ENCODE measurements at regions of chr2 and their contacts with region 1.

Region 1: DNA sequence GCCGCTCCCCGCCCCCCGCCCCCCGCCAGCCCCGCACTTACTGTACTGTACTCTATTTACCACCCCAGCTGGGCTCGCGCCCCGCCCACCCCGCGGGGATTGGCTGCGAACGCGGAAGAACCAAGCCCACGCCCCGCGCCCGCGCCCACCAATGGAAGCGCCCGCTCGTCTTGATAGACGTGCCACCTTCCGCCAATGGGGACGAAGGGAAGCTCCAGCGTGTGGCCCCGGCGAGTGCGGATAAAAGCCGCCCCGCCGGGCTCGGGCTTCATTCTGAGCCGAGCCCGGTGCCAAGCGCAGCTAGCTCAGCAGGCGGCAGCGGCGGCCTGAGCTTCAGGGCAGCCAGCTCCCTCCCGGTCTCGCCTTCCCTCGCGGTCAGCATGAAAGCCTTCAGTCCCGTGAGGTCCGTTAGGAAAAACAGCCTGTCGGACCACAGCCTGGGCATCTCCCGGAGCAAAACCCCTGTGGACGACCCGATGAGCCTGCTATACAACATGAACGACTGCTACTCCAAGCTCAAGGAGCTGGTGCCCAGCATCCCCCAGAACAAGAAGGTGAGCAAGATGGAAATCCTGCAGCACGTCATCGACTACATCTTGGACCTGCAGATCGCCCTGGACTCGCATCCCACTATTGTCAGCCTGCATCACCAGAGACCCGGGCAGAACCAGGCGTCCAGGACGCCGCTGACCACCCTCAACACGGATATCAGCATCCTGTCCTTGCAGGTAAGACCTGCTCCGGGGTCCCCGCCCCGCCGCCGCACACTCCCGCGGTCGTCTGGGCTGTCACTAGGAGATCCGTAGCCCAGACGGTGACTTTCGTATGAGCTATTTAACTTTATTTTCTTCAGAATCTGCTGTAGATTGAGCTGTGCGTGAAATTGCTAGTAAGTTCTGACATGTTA is at the start of gene ID2:
- DNase-seq: peak; percentile 99 to 100 (median 99)
- H3K4me3 ChIP-seq: peak within 1 kb of the TSS; percentile 73
- H3K27ac ChIP-seq: peak within 1 kb of the TSS; percentile 58 to 97
- H3K4me1 ChIP-seq: no peaks in the 10 kb centered on the region
- H3K27me3 ChIP-seq: no peaks in the 10 kb centered on the region
- CTCF ChIP-seq: peak in 2 of 3 donors; percentile 9 to 21
- EP300 ChIP-seq: no peak
- POLR2A ChIP-seq: peak; percentile 99
- total RNA-seq, gene ID2: 68.5 to 897 (median 168) TPM

Region 2: GRCh38 chr2:7427293-7428060 is 1254.6 kb before region 1 on chr2:
- intact Hi-C with region 1: loop called in 3 of 4 experiments (anchors 2 to 10 kb)
- DNase-seq: peak in 1 of 5 donors; percentile 40
- H3K4me3 ChIP-seq: no peak overlapping the region
- H3K27ac ChIP-seq: no peak overlapping the region
- H3K4me1 ChIP-seq: no peaks in the 10 kb centered on the region
- H3K27me3 ChIP-seq: no peaks in the 10 kb centered on the region
- CTCF ChIP-seq: peak; percentile 48 to 84 (median 61)
- EP300 ChIP-seq: no peak
- POLR2A ChIP-seq: no peak

Region 3: GRCh38 chr2:8004250-8004681 is 677.8 kb before region 1 on chr2:
- intact Hi-C with region 1: loop called in 1 of 4 experiments (anchors 10 kb)
- DNase-seq: peak in 3 of 5 donors; percentile 43 to 77 (median 51)
- H3K4me3 ChIP-seq: peak overlapping the region; percentile 1
- H3K27ac ChIP-seq: peak overlapping the region; percentile 2 to 92
- H3K4me1 ChIP-seq: peaks cover 16% of the 10 kb centered on the region
- H3K27me3 ChIP-seq: no peaks in the 10 kb centered on the region
- CTCF ChIP-seq: no peak
- EP300 ChIP-seq: no peak
- POLR2A ChIP-seq: no peak

Region 4: GRCh38 chr2:8234757-8235374 is 447.2 kb before region 1 on chr2:
- intact Hi-C with region 1: loop called in 1 of 4 experiments (anchors 10 kb)
- DNase-seq: no peak
- H3K4me3 ChIP-seq: no peak overlapping the region
- H3K27ac ChIP-seq: no peak overlapping the region
- H3K4me1 ChIP-seq: peaks cover 2% of the 10 kb centered on the region
- H3K27me3 ChIP-seq: no peaks in the 10 kb centered on the region
- CTCF ChIP-seq: no peak
- EP300 ChIP-seq: no peak
- POLR2A ChIP-seq: no peak

Region 5: GRCh38 chr2:8539743-8540551 is 142.1 kb before region 1 on chr2:
- intact Hi-C with region 1: loop called in 1 of 4 experiments (anchors 5 kb)
- DNase-seq: peak in 1 of 5 donors; percentile 15
- H3K4me3 ChIP-seq: no peak overlapping the region
- H3K27ac ChIP-seq: no peak overlapping the region
- H3K4me1 ChIP-seq: peaks cover 7% of the 10 kb centered on the region
- H3K27me3 ChIP-seq: no peaks in the 10 kb centered on the region
- CTCF ChIP-seq: no peak
- EP300 ChIP-seq: no peak
- POLR2A ChIP-seq: no peak

Region 6: GRCh38 chr2:9778012-9778411 is 1096.0 kb after region 1 on chr2:
- intact Hi-C with region 1: no loop called
- DNase-seq: no peak
- H3K4me3 ChIP-seq: no peak overlapping the region
- H3K27ac ChIP-seq: no peak overlapping the region
- H3K4me1 ChIP-seq: no peaks in the 10 kb centered on the region
- H3K27me3 ChIP-seq: no peaks in the 10 kb centered on the region
- CTCF ChIP-seq: no peak
- EP300 ChIP-seq: no peak
- POLR2A ChIP-seq: no peak

Measured in ovary (tissue), 10 donors.